Transverse colon (tissue), 4 donors: ENCODE measurements at regions of chr11 and their contacts with region 1.

Region 1: GRCh38 chr11:83819933-83820549 is 533.9 kb upstream of the CCDC90B start:
- DNase-seq: no peak
- H3K4me3 ChIP-seq: no peak overlapping the region
- H3K27ac ChIP-seq: no peak overlapping the region
- H3K4me1 ChIP-seq: no peaks in the 10 kb centered on the region
- H3K27me3 ChIP-seq: no peaks in the 10 kb centered on the region
- CTCF ChIP-seq: peak; percentile 34 to 61 (median 45)
- EP300 ChIP-seq: no peak
- POLR2A ChIP-seq: no peak

Region 2: DNA sequence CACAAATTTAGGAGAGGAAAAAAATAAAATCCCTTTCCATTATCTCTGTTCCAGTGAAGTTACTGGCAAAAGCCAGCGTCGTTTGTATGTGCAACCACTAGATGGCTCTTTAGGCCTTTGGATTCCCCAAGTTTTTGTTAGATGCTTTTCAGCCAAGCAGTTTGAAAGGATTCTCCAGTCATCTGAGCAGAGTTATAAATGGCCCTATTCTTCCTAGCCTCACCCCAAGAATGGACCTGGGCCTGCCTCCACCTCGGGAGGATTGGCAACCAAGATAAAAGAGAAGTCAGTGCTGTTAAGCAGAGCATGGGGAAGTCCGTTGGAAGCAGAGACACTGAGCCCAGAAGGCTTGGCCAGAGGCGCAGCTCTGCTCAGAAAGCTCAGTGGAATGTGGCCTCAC is 1101.7 kb before region 1 on chr11:
- in situ Hi-C with region 1: loop called in 3 of 4 experiments (anchors 25 kb)
- intact Hi-C with region 1: no loop called
- DNase-seq: no peak
- H3K4me3 ChIP-seq: no peak overlapping the region
- H3K27ac ChIP-seq: no peak overlapping the region
- H3K4me1 ChIP-seq: no peaks in the 10 kb centered on the region
- H3K27me3 ChIP-seq: no peaks in the 10 kb centered on the region
- CTCF ChIP-seq: peak; percentile 58 to 70 (median 64)
- EP300 ChIP-seq: no peak
- POLR2A ChIP-seq: no peak

Region 3: DNA sequence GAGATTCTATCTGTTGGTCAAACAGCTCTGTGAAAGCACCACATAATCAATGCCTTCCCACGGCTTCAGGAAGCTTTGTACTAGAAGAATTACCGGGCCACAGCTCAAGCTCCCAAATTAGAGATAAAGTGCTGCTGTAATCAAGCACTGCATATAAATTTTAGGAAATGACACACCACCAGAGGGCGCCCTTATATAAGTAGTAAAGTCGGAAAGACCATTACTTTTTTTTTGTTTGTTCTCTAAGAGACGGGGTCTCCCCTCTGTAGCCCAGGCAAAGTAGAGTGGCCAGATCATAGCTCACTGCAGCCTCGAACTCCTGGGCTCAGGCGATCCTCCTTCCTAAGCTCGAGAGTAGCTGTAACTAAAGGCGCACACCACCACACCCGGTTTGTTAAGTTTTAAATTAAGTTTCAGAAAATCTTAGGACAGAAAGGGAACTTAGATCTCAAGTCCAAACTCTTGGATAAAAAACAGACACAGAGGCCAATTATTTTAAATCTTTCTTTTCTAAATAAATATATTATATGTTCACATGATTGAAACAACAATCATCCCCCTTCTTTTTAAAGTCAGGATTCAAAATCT is 952.5 kb before region 1 on chr11:
- in situ Hi-C with region 1: loop called in 1 of 4 experiments (anchors 25 kb)
- intact Hi-C with region 1: no loop called
- DNase-seq: peak; percentile 75
- H3K4me3 ChIP-seq: peak overlapping the region in 1 of 4 donors; percentile 38
- H3K27ac ChIP-seq: no peak overlapping the region
- H3K4me1 ChIP-seq: peaks cover 0 to 38% (median 8%) of the 10 kb centered on the region in 4 donors
- H3K27me3 ChIP-seq: no peaks in the 10 kb centered on the region
- CTCF ChIP-seq: peak; percentile 71 to 78 (median 74)
- EP300 ChIP-seq: no peak
- POLR2A ChIP-seq: no peak

Region 4: DNA sequence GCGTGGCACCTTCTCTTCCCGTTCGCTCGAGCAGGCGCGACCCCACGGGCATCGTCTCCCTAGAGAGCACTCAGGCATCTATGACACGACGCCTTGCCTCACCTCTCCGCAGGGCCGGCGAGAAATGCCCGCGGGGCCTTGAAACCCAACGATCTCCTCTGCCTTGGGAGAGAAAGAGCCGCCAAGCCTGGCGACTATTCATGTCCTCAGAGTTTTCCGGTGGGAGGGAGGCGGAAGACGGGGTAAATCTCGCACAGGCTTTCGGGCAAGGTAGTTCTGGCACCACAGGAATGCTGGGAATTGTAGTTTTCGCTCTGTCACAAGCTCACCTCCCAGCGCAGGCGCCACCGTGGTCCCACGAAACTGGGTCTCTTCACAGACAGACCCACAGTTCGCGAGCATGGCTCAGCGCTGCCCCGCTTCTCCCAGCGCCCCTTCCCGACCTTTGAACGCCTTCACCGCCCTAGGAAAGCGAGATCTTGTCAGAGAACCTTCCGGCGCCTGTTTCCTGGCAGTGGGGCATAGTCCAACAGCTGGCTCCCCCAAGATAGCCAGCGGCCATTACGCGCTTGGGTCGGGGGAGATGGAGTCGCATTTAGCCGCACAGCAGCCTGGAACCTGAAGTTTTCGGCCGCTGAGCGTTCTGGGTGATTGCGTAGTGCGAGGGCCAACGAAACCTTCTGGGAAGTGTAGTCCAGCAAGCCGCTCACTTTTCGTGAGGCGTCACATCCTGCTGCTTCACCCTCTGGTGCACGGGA is 534.1 kb before region 1 on chr11 and contains the start of gene CCDC90B:
- in situ Hi-C with region 1: loop called in 2 of 4 experiments (anchors 10 to 25 kb)
- intact Hi-C with region 1: no loop called
- DNase-seq: peak; percentile 96
- H3K4me3 ChIP-seq: peak within 1 kb of the TSS; percentile 67 to 85 (median 72)
- H3K27ac ChIP-seq: peak within 1 kb of the TSS; percentile 93 to 99 (median 98)
- H3K4me1 ChIP-seq: peaks cover 10 to 37% (median 20%) of the 10 kb centered on the region in 4 donors
- H3K27me3 ChIP-seq: no peaks in the 10 kb centered on the region
- CTCF ChIP-seq: no peak
- EP300 ChIP-seq: no peak
- POLR2A ChIP-seq: peak; percentile 95
- total RNA-seq, gene CCDC90B: 3.4 to 40.6 (median 21.6) TPM

Region 5: DNA sequence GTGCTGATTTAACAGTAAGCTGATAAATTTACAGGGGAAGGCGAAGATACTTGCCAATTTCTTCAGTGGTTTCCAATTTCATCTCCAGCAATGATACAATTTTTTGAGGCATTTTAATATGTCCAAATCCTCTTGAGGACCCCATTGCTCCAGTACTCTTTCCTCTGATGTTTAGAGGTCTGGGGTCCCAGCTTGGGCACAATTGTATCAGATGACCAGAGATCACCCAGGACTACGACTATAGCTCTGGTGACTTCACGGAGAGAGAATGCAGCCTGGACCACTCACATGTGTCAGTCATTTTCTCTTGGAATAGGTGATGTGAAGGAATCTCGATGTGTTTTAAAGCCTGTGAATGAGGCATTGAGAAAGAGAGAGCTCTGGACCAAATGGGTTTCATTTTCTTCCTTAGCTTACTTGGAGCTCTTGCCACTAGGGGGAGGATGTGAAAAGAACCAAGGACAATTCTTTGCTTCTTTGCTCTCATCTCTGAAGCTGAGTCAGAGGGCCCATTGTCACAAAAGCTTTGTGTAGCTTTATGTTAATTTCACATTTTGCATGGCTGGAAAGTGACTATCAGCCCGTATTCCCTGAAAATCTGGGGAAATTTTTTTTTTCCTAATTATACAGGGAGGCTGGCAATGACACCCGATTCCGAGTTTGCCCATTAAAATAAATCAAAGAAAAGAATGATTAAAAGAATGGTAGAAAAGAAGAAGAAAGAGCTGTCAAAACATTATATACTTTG is 527.2 kb before region 1 on chr11:
- in situ Hi-C with region 1: loop called in 2 of 4 experiments (anchors 10 to 25 kb)
- intact Hi-C with region 1: loop called (anchors 2 kb)
- DNase-seq: no peak
- H3K4me3 ChIP-seq: no peak overlapping the region
- H3K27ac ChIP-seq: no peak overlapping the region
- H3K4me1 ChIP-seq: no peaks in the 10 kb centered on the region
- H3K27me3 ChIP-seq: no peaks in the 10 kb centered on the region
- CTCF ChIP-seq: peak; percentile 52 to 66 (median 63)
- EP300 ChIP-seq: no peak
- POLR2A ChIP-seq: no peak

Region 6: DNA sequence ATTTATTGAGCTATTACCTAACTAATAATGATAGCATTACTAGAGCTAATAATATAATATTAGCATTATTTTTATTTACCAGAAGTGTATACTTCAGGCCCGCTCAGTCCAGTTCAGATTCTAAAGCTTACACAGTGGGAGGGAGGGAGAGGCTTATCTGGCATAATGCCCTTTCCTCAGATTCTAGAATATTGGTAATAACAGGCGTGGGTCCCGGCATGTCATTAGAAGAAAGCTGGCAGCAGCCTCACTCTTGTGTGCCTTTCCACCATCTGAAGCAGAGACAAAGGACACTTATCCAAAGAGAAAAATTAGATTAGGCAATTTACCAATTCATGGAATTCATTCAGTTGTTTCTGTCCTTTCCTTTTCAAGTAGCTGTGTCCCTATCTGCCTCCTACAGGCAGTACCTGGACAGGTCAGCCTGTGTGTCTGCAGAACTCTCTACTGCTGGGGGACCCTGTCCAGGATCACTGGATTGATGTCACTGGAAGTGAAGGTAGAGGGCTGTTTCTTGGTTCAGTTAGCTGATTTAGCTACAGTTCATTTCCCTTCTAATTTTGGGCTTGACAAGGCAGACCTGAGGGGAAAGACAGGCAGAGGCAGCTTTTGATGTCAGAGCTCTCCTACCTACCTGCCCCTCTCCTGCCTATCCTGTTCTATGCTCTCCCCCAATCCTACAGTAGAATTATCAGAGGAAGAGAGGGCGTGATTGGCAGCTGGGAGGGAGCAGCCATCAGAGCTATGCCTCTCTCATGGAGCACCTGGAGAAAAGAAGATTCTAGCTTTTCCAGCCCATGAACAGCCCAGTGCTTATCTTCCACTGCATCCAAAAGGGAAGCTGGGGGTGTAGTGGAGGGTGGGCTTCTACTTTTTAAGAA is 513.6 kb before region 1 on chr11:
- in situ Hi-C with region 1: loop called in 1 of 4 experiments (anchors 25 kb)
- intact Hi-C with region 1: no loop called
- DNase-seq: no peak
- H3K4me3 ChIP-seq: no peak overlapping the region
- H3K27ac ChIP-seq: no peak overlapping the region
- H3K4me1 ChIP-seq: no peaks in the 10 kb centered on the region
- H3K27me3 ChIP-seq: no peaks in the 10 kb centered on the region
- CTCF ChIP-seq: no peak
- EP300 ChIP-seq: no peak
- POLR2A ChIP-seq: no peak

Region 7: GRCh38 chr11:83612891-83613766 is 206.9 kb before region 1 on chr11:
- in situ Hi-C with region 1: no loop called
- intact Hi-C with region 1: no loop called
- DNase-seq: no peak
- H3K4me3 ChIP-seq: no peak overlapping the region
- H3K27ac ChIP-seq: no peak overlapping the region
- H3K4me1 ChIP-seq: no peaks in the 10 kb centered on the region
- H3K27me3 ChIP-seq: no peaks in the 10 kb centered on the region
- CTCF ChIP-seq: no peak
- EP300 ChIP-seq: no peak
- POLR2A ChIP-seq: no peak

Region 8: DNA sequence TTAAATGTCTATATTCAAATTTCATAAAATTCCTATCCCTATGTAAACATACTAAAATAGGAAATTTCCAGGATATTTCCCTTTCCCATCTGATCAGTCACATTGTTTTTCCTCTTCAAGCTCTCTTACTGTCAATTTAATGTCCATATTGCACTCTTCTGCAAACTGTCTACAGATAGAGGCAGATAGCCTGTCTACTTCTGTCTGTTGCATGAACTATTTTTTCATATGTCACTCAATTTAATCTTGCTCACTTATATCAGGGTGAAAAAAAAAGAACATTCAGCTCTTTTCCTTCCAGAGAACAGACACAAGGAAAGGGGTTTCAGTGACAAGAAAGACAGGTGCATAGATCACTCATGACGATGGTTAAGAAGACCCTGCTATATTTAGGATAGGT is 480.1 kb after region 1 on chr11:
- in situ Hi-C with region 1: no loop called
- intact Hi-C with region 1: no loop called
- DNase-seq: no peak
- H3K4me3 ChIP-seq: no peak overlapping the region
- H3K27ac ChIP-seq: no peak overlapping the region
- H3K4me1 ChIP-seq: no peaks in the 10 kb centered on the region
- H3K27me3 ChIP-seq: no peaks in the 10 kb centered on the region
- CTCF ChIP-seq: no peak
- EP300 ChIP-seq: no peak
- POLR2A ChIP-seq: no peak